ENCODE measurements at regions of chr22 and their contacts with region 1.

Region 1: DNA sequence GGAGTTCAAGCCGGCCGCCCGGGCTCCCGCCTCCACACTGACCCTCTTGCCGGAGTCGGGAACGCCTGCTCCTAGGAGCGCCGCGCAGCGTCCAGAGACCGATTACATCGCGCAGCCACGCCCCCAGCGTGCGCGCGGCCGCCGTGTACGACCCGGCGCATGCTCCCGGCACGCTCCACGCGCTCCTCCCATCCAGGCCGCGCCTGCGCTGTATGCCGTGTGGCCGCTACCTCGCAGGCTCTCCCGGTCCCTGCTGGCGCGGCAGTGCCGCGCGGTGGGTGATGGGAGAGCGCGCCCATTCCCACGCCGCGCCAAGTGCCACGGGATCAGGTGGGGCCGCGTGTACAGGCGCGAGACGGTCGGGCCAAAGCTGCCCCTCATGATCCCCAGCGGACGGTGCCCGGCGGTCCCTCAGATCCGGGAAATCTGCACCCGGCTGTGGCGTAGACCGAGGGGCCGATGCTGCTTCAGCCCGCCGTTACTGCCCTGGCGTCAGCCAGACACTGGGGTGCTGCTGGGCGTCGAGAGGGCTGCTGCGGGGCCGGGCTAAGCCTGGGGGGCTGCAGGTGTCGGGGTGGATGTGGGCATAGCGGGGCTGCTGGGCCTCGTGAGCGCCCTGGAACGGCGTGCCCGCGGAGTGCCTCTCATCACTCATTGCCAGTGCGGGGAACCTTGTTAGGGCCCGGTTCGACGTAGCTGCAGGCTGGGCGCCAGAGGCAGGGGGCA is at the starts of genes GNB1L and RTL10:
- DNase-seq: peak; percentile 95
- H3K4me3 Mint-ChIP-seq: peak within 1 kb of the TSS; percentile 98
- H3K27ac Mint-ChIP-seq: peak within 1 kb of the TSS; percentile 93
- H3K4me1 Mint-ChIP-seq: peaks cover 35% of the 10 kb centered on the region
- H3K27me3 Mint-ChIP-seq: no peaks in the 10 kb centered on the region
- total RNA-seq, gene GNB1L: 14.7 and 17.7 TPM in 2 replicates
- total RNA-seq, gene RTL10: 16.6 and 19.0 TPM in 2 replicates

Region 2: GRCh38 chr22:19730655-19731360 is 124.1 kb before region 1 on chr22:
- intact Hi-C with region 1: loop called (anchors 2 kb)
- DNase-seq: peak; percentile 69
- H3K4me3 Mint-ChIP-seq: peak overlapping the region; percentile 68
- H3K27ac Mint-ChIP-seq: no peak overlapping the region
- H3K4me1 Mint-ChIP-seq: no peaks in the 10 kb centered on the region
- H3K27me3 Mint-ChIP-seq: peaks cover 4% of the 10 kb centered on the region

Region 3: DNA sequence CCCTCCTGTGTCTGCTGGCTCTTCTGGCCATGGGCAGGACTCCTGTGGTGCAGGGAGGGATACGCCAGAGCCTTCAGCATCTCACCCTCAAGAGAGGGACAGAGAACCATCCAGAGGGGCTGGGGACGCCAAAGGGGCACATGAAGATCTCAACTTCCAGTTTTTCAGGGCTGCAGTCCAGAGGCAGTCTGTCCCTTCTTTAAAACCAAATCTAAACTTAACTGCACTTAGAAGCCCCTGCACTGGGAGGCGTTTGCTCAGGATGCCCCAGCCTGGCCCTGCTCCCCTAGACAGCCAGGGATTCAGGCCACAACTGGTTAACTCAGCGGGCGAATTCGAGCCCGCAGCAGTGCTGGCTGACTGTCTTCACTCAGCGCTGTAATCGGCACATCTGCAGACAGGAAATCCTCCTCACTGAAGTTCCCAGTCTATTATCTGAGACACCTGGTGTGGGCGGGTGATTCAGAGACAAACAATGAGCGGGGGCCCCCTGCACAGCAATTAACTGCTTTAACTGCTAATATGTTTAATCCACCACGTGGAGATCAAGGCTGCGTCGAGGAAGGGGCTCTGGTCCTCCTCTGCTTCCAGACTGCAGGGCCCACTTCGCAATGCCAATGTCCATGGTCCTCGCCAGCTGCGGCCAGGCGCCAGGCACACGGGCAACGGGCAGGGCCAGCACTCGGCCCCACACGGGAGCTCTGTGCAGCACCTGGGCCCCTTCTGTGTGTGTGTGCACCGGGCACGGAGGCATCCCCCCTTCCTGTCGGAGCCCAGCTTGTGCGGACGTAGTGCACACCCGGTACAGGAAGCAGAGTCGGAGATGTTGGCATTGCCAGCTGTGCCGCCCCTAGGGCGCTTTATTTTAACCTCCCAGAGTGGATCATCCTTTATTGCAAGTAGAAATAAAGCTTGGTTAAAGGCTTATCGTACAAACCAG is 36.6 kb after region 1 on chr22:
- intact Hi-C with region 1: loop called (anchors 1 kb)
- DNase-seq: peak; percentile 65
- H3K4me3 Mint-ChIP-seq: peak overlapping the region; percentile 66
- H3K27ac Mint-ChIP-seq: peak overlapping the region; percentile 81
- H3K4me1 Mint-ChIP-seq: peaks cover 35% of the 10 kb centered on the region
- H3K27me3 Mint-ChIP-seq: no peaks in the 10 kb centered on the region

Region 4: DNA sequence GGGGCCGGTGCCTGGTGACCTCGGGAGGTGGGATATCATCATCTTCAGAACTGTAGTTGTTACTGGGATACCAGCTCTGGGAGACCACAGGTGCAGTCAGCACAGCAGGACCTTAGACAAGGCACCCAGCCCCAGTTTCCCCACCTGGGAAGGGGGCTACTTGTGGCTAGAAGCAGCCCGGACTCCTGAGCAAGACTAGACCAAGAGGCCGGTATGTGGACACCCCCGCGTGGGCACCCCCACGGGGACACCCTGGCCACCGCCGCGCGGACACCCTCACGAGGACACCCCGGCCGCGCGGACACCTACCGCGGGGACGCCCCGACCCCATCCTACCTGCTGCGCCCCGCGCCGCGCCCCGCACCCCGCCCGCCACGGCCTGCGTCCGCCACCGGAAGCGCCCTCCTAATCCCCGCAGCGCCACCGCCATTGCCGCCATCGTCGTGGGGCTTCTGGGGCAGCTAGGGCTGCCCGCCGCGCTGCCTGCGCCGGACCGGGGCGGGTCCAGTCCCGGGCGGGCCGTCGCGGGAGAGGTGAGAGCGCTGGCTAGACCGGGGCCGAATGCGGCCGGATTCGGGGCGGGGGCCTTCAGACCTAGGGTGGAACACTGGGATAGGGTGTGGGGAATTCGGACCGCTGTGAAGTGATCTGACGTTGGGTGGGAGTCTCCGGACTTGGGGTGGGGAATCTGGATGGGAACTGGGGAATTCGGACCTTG is 86.6 kb after region 1 on chr22 and contains the starts of genes COMT and TXNRD2:
- intact Hi-C with region 1: loop called (anchors 5 kb)
- DNase-seq: peak; percentile 66
- H3K4me3 Mint-ChIP-seq: peak within 1 kb of the TSS; percentile 97
- H3K27ac Mint-ChIP-seq: peak within 1 kb of the TSS; percentile 95
- H3K4me1 Mint-ChIP-seq: peaks cover 26% of the 10 kb centered on the region
- H3K27me3 Mint-ChIP-seq: no peaks in the 10 kb centered on the region
- total RNA-seq, gene COMT: 93.4 and 95.6 TPM in 2 replicates
- total RNA-seq, gene TXNRD2: 19.9 and 20.9 TPM in 2 replicates

Measured in activated T-helper 2 cell treated with anti-CD3 and anti-CD28 coated beads, Interferon-gamma antibody, Interleukin-2, Interleukin-4, amounts not matched to agents 10 μg/mL and 5 μg/mL and 100 μg/mL, durations not matched to agents 14 hours and 24 hours and 36 hours (primary cell).